Calu3 (cell line): ENCODE measurements at regions of chr2 and their contacts with region 1.

Region 1: DNA sequence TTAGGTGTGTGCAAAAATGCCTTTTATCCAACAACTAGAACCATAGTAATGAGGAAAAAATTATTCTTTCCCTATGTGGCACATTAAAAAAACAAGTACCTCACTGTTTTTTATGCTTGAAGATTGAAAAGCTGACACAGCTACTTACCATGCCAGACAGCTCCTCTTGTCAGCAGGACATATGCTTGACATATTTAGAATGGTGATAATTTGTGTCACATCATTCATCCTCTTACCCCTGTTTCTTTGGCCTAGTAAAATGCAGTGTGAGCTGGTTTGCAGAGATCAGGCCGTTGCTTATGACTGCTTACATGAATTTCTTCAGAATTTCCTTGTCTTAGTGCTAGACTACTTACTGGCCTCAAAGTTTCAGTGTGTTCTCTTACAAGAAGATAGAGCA is 869.9 kb downstream of the LRP1B start:
- DNase-seq: no peak
- H3K4me3 Mint-ChIP-seq: no peak overlapping the region
- H3K27ac Mint-ChIP-seq: no peak overlapping the region
- H3K4me1 Mint-ChIP-seq: no peaks in the 10 kb centered on the region
- H3K27me3 Mint-ChIP-seq: no peaks in the 10 kb centered on the region
- CTCF ChIP-seq: no peak

Region 2: DNA sequence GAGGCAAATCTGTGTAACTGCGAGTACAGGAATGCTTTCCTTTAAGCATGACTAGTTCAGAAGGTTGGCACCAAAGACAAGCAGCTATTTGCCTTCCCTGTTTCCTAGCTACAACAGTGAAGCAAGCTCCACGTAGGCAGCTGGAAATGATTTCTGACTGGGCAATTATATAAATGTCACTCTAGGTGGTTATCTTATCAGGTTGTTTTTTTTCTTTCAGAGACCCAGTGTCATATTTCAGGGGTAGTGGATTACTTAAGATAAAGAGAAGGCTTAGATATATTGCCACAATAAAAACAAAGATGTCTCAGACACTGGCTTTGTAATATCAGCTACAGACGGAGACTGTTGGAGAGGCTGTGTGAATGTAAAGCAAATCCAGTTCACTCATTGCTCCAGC is 1731.8 kb before region 1 on chr2:
- CTCF ChIA-PET with region 1: no interaction called
- intact Hi-C with region 1: loop called (anchors 5 kb)
- DNase-seq: no peak
- H3K4me3 Mint-ChIP-seq: no peak overlapping the region
- H3K27ac Mint-ChIP-seq: no peak overlapping the region
- H3K4me1 Mint-ChIP-seq: no peaks in the 10 kb centered on the region
- H3K27me3 Mint-ChIP-seq: no peaks in the 10 kb centered on the region
- CTCF ChIP-seq: no peak

Region 3: GRCh38 chr2:141207036-141207385 is 53.9 kb before region 1 on chr2:
- CTCF ChIA-PET with region 1: no interaction called
- intact Hi-C with region 1: no loop called
- DNase-seq: no peak
- H3K4me3 Mint-ChIP-seq: no peak overlapping the region
- H3K27ac Mint-ChIP-seq: no peak overlapping the region
- H3K4me1 Mint-ChIP-seq: no peaks in the 10 kb centered on the region
- H3K27me3 Mint-ChIP-seq: no peaks in the 10 kb centered on the region
- CTCF ChIP-seq: no peak

Region 4: DNA sequence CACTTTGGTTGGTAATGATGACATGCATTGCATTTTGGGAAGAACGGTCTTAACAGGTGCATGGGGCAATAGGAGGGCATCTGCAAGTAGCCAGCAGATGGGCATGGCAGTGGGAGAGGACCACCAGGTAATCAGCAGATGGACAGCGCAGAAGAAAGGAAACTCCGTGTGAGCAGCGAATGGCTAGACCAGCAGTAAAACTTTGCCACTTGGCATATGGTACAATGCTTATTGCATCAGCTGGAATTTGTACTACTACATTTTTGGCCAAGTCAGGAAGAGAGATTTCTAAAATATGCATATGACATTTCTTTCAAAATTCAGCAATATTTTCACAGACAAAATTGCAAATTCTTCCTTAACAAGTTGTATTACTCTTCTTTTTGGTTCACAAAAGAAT is 101.4 kb after region 1 on chr2:
- CTCF ChIA-PET with region 1: no interaction called
- intact Hi-C with region 1: no loop called
- DNase-seq: no peak
- H3K4me3 Mint-ChIP-seq: no peak overlapping the region
- H3K27ac Mint-ChIP-seq: no peak overlapping the region
- H3K4me1 Mint-ChIP-seq: no peaks in the 10 kb centered on the region
- H3K27me3 Mint-ChIP-seq: no peaks in the 10 kb centered on the region
- CTCF ChIP-seq: no peak